Activated T-helper 2 cell treated with anti-CD3 and anti-CD28 coated beads, Interferon-gamma antibody, Interleukin-2, Interleukin-4, amounts not matched to agents 10 μg/mL and 5 μg/mL and 100 μg/mL, durations not matched to agents 14 hours and 24 hours and 36 hours (primary cell): ENCODE measurements at regions of chr2 and their contacts with region 1.

Region 1: DNA sequence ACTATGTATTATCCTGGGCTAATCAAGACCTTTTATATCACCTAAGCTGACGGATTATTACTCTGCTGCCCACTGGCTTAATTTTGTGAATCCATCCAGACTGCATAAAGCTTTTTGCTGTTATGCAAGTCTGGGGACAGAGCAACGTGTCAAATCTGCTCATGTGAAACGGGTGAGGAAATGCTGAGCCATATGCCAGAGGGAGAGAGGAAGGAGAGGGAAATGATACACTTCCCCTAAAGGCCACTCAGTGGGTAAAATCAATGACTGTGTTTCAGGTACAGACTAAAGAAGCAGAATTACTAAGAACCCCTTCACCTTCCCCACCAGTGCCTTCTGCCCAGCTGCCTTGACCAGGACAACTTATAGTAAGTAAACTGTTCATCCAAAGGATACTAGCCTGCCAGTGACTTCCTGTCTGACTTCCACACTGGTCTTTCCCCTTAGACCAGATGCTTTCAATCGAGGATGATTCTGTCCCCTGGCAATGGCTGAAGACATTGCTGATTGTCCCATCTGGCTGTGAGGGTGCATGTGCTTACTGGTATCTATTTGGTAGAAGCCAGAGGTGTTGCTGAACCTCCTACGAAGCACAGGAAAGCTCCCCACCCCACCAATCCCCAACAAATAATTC is 43.0 kb downstream of the STAT1 start:
- DNase-seq: no peak
- H3K4me3 Mint-ChIP-seq: no peak overlapping the region
- H3K27ac Mint-ChIP-seq: peak overlapping the region; percentile 71
- H3K4me1 Mint-ChIP-seq: peaks cover 26% of the 10 kb centered on the region
- H3K27me3 Mint-ChIP-seq: no peaks in the 10 kb centered on the region

Region 2: DNA sequence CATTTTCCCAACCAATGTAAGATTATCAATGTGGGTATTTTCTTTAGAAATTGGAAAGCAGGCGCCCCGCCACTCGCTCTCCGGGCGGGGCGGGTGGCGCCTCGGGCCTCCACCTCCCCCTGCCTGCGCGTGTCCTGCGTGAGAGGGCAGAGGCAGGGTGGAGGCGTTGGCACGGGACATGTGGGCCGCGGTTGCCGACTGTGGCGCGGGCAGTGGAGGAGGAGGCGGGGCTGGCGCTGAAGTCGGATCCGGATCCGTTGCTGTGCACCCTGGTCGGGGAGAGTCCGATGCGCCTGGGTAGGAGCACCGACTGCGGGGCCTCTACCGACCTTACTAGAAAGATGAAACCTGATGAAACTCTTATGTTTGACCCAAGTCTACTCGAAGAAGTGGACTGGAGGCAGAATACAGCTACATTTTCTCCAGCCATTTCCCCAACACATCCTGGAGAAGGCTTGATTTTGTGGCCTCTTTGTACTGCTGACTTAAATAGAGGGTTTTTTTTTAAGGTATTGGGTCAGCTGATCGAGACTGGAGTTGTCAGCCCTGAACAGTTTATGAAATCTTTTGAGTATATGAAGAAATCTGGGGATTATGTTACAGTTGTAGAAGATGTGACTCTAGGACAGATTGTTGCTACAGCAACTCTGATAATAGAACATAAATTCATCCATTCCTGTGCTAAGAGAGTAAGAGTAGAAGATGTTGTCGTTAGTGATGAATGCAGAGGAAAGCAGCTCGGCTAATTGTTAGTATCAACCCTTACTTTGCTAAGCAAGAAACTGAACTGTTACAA is 1148.8 kb before region 1 on chr2:
- intact Hi-C with region 1: no loop called
- DNase-seq: no peak
- H3K4me3 Mint-ChIP-seq: no peak overlapping the region
- H3K27ac Mint-ChIP-seq: no peak overlapping the region
- H3K4me1 Mint-ChIP-seq: peaks cover 18% of the 10 kb centered on the region
- H3K27me3 Mint-ChIP-seq: no peaks in the 10 kb centered on the region

Region 3: GRCh38 chr2:190984595-190984994 is 13.6 kb after region 1 on chr2:
- intact Hi-C with region 1: loop called (anchors 2 kb)
- DNase-seq: no peak
- H3K4me3 Mint-ChIP-seq: no peak overlapping the region
- H3K27ac Mint-ChIP-seq: peak overlapping the region; percentile 69
- H3K4me1 Mint-ChIP-seq: peaks cover 61% of the 10 kb centered on the region
- H3K27me3 Mint-ChIP-seq: no peaks in the 10 kb centered on the region